ENCODE measurements at regions of chr16 and their contacts with region 1.

Region 1: DNA sequence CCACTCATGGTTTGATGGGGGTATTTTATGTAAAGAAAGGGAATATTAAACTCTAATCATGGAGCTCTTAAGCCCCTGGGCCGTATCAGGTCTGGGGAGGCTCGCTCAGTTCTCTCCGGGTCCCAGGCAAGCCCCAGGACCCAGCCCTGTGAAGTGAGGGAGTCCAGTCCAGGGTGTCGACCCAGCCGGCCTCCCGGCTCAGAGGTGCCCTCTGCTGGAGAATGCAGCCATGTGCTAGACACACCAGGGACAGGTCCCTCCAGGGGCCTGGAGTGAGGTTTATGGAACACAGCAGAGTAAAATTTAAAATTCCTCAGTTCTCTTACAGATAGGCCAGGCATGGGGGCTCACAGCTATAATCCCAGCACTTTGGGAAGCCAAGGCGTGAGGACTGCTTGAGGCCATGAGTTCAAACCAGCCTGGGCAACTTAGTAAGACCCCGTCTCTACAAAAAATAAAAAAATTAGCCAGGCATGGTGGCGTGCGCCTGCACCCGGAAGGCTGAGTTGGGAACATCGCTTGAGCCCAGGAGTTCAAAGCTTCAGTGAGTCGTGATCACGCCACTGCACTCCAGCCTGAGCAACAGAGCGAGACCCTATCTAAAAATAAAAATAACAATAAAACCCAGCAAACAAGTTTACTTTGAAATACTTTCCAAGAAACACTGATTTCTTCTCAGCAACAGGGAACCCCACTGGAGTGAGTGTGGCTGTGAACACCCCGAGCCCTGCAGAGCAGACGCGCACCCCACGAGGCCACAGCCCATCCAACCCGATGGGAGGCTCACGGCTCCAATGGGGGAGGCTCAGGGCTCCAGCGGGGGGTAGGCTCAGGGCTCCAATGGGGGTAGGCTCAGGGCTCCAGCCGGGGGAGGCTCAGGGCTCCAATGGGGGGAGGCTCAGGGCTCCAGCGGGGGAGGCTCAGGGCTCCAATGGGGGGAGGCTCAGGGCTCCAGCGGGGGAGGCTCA is 72.2 kb downstream of the ZNF778 start:
- DNase-seq: peak; percentile 60 to 63 (median 61)
- H3K4me3 ChIP-seq: no peak overlapping the region
- H3K4me3 Mint-ChIP-seq: no peak overlapping the region
- H3K27ac ChIP-seq: no peak overlapping the region
- H3K27ac Mint-ChIP-seq: peak overlapping the region in 4 of 7 donors; percentile 26 to 76 (median 40)
- H3K4me1 ChIP-seq: no peaks in the 10 kb centered on the region
- H3K4me1 Mint-ChIP-seq: no peaks in the 10 kb centered on the region
- H3K27me3 ChIP-seq: no peaks in the 10 kb centered on the region
- H3K27me3 Mint-ChIP-seq: no peaks in the 10 kb centered on the region
- CTCF ChIP-seq: peak; percentile 91

Region 2: DNA sequence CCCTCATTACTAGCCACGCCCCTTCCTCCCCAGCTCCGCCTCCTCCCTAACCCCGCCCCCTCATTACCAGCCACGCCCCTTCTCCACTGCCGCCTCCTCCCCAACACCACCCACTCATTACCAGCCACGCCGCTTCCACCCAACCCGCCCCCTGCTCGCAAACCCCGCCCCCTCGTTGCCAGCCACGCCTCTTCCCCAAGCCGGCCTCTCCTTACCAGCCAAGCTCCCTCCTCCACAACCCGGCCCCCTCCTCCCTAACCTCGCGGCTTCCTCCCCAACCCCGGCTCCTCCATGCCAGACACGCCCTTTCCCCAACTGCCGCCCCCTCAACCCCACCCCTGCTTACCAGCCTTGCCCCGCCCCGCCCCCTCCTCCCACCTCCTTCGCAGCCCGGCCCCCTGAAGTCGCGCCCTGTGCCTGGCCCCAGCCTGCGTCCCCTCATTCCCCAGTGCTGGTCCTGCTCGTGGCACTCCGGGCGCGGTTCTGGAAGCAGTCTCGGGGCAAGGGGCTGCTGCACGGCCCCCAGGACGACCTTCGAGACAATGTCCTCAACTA is 96.6 kb before region 1 on chr16:
- intact Hi-C with region 1: no loop called
- DNase-seq: peak in 2 of 3 donors; percentile 26 to 54
- H3K4me3 ChIP-seq: no peak overlapping the region
- H3K4me3 Mint-ChIP-seq: no peak overlapping the region
- H3K27ac ChIP-seq: no peak overlapping the region
- H3K27ac Mint-ChIP-seq: no peak overlapping the region
- H3K4me1 ChIP-seq: peaks cover 5 to 8% of the 10 kb centered on the region in 2 donors
- H3K4me1 Mint-ChIP-seq: no peaks in the 10 kb centered on the region
- H3K27me3 ChIP-seq: peaks cover 0 to 16% of the 10 kb centered on the region in 2 donors
- H3K27me3 Mint-ChIP-seq: peaks cover 17 to 30% (median 27%) of the 10 kb centered on the region in 3 donors
- CTCF ChIP-seq: no peak

Region 3: DNA sequence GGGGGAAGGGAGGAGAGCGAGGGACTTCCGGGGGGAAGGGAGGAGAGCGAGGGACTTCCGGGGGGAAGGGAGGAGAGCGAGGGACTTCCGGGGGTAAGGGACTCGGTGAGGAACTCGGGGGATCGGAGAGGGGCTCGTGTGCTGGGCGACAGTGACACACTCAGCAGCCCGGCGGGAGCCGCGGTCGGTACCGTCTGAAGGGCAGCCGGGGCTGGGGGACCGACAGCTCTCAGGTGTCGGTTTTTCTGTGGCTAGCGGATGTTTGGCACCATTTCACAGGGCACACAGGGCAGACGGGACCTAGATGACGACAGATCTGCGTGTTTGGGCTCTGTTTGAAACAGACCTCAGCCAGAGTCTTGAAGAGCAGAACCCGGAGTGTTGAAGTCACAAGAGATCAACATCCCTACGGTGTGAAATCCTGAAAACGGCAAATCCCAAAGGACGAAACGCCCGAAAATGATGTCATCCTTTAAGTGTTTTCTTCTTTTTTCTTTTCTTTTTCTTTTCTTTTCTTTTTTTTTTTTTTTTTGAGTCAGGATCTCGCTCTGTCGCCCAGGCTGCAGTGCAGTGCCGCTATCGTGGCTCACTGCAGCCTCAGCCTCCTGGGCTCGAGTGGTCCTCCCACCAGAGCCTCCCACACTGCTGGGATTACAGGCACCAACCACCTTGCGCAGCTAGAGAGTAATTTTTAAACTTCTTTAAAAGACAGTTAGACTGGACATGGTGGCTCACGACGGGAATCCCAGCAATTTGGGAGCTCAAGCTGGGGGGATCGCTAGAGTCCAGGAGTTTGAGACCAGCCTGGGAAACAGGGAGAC is 48.3 kb before region 1 on chr16:
- intact Hi-C with region 1: loop called in 1 of 2 experiments (anchors 2 kb)
- DNase-seq: peak; percentile 81 to 92 (median 88)
- H3K4me3 ChIP-seq: peak overlapping the region; percentile 59 to 80 (median 79)
- H3K4me3 Mint-ChIP-seq: peak overlapping the region; percentile 94 to 96
- H3K27ac ChIP-seq: peak overlapping the region; percentile 91 to 97
- H3K27ac Mint-ChIP-seq: peak overlapping the region; percentile 95 to 99 (median 98)
- H3K4me1 ChIP-seq: peaks cover 14 to 18% of the 10 kb centered on the region in 2 donors
- H3K4me1 Mint-ChIP-seq: peaks cover 15% of the 10 kb centered on the region
- H3K27me3 ChIP-seq: peaks cover 0 to 6% of the 10 kb centered on the region in 2 donors
- H3K27me3 Mint-ChIP-seq: peaks cover 17 to 20% (median 18%) of the 10 kb centered on the region in 3 donors
- CTCF ChIP-seq: no peak